ENCODE measurements at regions of chr6 and their contacts with region 1.

Region 1: GRCh38 chr6:18264219-18264922 is at the start of gene DEK:
- DNase-seq: peak; percentile 74
- H3K4me3 ChIP-seq: peak within 1 kb of the TSS; percentile 72 to 91 (median 82)
- H3K27ac ChIP-seq: peak within 1 kb of the TSS; percentile 77
- H3K4me1 ChIP-seq: peaks cover 41% of the 10 kb centered on the region
- H3K27me3 ChIP-seq: no peaks in the 10 kb centered on the region
- CTCF ChIP-seq: peak; percentile 19 to 61
- total RNA-seq, gene DEK: 34.5 to 103 TPM

Region 2: DNA sequence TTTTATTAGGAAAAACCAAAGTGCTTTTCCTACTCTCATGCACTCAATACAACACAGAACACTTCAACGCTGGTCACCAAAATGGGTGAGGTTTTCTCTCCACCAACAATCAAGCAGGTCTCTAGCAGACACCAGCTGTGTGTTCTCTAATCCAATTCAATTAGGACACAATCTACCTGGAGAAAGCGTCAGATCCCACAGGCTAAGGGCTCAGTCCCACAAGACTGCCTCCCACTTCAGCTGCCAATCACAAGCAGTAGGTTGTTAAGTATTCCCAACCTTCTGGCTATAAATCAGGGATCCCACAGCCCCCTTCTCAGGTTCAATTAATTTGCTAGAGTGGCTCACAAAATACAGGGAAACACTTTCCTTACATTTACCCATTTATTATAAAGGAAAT is 1114.8 kb before region 1 on chr6:
- CTCF ChIA-PET with region 1: no interaction called
- dilution Hi-C with region 1: no loop called
- in situ Hi-C with region 1: no loop called
- intact Hi-C with region 1: no loop called
- DNase-seq: no peak
- H3K4me3 ChIP-seq: no peak overlapping the region
- H3K27ac ChIP-seq: no peak overlapping the region
- H3K4me1 ChIP-seq: no peaks in the 10 kb centered on the region
- H3K27me3 ChIP-seq: no peaks in the 10 kb centered on the region
- CTCF ChIP-seq: no peak

Region 3: GRCh38 chr6:18242062-18242851 is 22.1 kb before region 1 on chr6:
- CTCF ChIA-PET with region 1: interaction called, 4 read pairs
- dilution Hi-C with region 1: no loop called
- in situ Hi-C with region 1: no loop called
- intact Hi-C with region 1: loop called (anchors 2 kb)
- DNase-seq: peak; percentile 90
- H3K4me3 ChIP-seq: no peak overlapping the region
- H3K27ac ChIP-seq: peak overlapping the region; percentile 73
- H3K4me1 ChIP-seq: peaks cover 35% of the 10 kb centered on the region
- H3K27me3 ChIP-seq: no peaks in the 10 kb centered on the region
- CTCF ChIP-seq: no peak

Region 4: GRCh38 chr6:18306977-18307376 is 42.6 kb after region 1 on chr6:
- CTCF ChIA-PET with region 1: no interaction called
- dilution Hi-C with region 1: no loop called
- in situ Hi-C with region 1: no loop called
- intact Hi-C with region 1: no loop called
- DNase-seq: peak; percentile 58
- H3K4me3 ChIP-seq: no peak overlapping the region
- H3K27ac ChIP-seq: no peak overlapping the region
- H3K4me1 ChIP-seq: peaks cover 21% of the 10 kb centered on the region
- H3K27me3 ChIP-seq: no peaks in the 10 kb centered on the region
- CTCF ChIP-seq: no peak

Measured in mammary epithelial cell (primary cell).